ENCODE measurements at regions of chr2 and their contacts with region 1.

Region 1: GRCh38 chr2:25337276-25337675 is 4.4 kb downstream of the DNMT3A start:
- DNase-seq: no peak
- CTCF ChIP-seq: no peak

Region 2: GRCh38 chr2:25323042-25323514 is 14.2 kb before region 1 on chr2:
- CTCF ChIA-PET with region 1: interaction called, 15 read pairs
- POLR2A ChIA-PET with region 1: interaction called, 10 read pairs
- DNase-seq: peak; percentile 43
- CTCF ChIP-seq: no peak

Region 3: DNA sequence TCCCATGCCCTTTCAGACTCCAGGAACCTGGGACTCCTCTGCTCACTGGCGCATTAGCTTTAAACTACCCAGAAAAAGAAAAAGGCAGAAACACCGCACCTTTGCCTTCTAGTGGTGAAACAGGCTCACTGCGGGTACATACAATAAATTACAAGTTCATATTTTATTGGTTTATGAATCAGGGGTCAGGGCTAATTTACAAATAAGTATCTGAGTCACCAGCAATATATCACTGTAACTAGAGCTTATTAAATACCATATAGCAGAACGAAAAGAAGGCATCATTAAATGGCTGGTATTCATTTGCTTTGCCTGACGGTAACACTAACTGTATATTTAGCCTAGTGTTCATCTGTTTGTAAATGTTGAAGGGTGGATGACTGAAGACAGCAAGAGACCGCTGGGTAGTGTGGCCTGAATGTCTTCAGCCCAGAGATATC is 363.0 kb after region 1 on chr2:
- CTCF ChIA-PET with region 1: no interaction called
- POLR2A ChIA-PET with region 1: no interaction called
- DNase-seq: peak; percentile 52
- CTCF ChIP-seq: peak; percentile 71

Measured in GM10248 (cell line).